ENCODE measurements at regions of chr22 and their contacts with region 1.

Region 1: DNA sequence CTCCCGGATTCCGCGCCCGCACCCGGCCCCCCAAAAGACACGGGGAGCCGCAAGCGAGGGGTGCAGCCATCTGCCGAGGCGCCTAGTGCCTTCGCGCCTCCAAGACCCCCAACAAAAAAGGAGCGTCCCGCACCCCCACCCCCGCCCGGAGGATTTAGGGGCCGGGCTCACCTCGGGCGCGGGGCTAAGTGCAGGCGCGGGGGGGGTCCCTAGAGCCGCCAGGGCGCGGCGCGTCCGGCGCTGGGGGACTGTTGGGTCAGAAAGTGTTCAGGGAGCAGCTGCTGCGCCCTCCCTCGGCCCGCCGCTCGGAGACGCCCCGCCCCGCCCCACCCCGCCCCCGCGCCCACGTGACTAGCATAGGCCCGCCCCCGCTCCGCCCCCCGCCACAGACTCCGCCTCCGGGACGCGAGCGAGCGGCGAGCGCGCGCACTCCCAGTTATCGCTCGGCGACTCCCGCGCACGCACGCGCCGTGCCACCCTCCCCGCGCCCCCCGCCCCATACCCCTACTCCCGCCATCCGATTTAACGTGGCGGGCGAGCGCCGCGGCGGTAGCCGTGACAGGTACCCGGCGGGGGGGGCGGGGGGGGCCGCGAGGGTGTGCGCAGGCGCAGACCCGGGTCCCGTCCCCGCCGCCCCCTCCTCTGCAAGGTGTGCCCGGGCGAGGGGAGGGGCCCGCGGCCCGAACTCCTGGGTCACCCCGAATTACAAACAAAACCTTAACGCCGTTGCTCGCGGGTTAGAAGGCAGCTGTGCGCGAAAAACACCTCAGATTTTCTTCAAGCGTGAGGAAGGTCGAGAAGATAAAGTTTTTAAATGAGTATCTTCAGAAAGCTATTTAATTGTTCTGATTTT is 56.2 kb downstream of the KCNJ4 start:
- DNase-seq: peak; percentile 74 to 91 (median 82)
- ATAC-seq: peak; percentile 93
- H3K4me3 ChIP-seq: peak overlapping the region; percentile 46
- H3K4me3 Mint-ChIP-seq: peak overlapping the region; percentile 78 to 93 (median 85)
- H3K27ac ChIP-seq: peak overlapping the region; percentile 69
- H3K27ac Mint-ChIP-seq: peak overlapping the region in 8 of 9 donors; percentile 55 to 84 (median 76)
- H3K4me1 ChIP-seq: no peaks in the 10 kb centered on the region
- H3K4me1 Mint-ChIP-seq: peaks cover 6 to 41% (median 33%) of the 10 kb centered on the region in 7 donors
- H3K27me3 ChIP-seq: no peaks in the 10 kb centered on the region
- H3K27me3 Mint-ChIP-seq: peaks cover 0 to 30% (median 0%) of the 10 kb centered on the region in 5 donors

Region 2: DNA sequence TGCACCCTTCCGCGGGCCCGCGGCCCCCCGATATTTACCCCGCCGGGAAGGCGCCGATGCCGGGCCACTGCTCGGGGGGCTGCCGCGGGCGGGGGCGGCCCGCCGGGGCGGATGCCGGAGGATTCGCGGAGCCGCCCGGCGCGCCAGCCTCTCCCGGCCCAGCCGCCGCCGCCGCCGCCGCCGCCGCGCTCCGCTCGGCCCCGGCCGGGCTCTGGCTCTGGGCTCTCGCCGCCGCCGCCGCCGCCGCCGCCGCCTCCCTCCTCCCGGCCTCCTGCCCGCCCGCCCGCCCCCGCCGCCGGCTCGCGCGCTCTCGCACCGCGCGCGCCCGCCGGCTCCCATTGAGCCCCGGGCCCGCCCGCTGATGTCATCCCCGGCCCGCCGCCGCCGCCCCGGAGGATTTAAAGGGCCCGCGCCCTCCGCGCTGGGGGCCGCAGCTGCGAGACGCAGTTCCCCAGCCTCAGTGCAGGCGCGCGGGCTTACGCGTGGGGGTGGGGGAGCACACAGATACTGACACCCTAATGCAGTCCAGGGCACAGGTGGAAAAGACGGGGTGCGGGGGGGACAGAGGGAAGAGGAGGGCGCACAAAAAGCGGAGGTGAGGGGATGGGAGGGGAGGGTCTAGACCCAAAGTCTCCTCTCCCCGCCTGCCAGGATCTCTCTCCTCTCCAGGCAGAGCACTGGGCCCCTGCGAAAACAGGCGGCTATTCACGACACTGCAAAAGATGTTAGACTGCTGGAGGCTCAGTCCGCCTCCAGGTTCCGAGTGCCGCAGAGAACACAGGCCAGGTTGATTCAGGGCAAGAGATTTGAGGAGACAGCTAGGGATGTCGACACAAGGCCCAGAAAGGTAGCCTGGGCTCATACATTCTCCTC is 81.5 kb before region 1 on chr22 and contains the start of gene CSNK1E:
- CTCF ChIA-PET with region 1: no interaction called
- POLR2A ChIA-PET with region 1: no interaction called
- intact Hi-C with region 1: loop called (anchors 1 to 2 kb)
- DNase-seq: peak; percentile 67 to 85 (median 74)
- ATAC-seq: peak; percentile 79
- H3K4me3 ChIP-seq: peak within 1 kb of the TSS; percentile 62
- H3K4me3 Mint-ChIP-seq: peak within 1 kb of the TSS; percentile 84 to 92 (median 89)
- H3K27ac ChIP-seq: peak within 1 kb of the TSS; percentile 91
- H3K27ac Mint-ChIP-seq: peak within 1 kb of the TSS; percentile 94 to 97 (median 95)
- H3K4me1 ChIP-seq: peaks cover 28 to 39% of the 10 kb centered on the region in 2 donors
- H3K4me1 Mint-ChIP-seq: peaks cover 31 to 49% (median 42%) of the 10 kb centered on the region in 7 donors
- H3K27me3 ChIP-seq: no peaks in the 10 kb centered on the region
- H3K27me3 Mint-ChIP-seq: no peaks in the 10 kb centered on the region
- total RNA-seq, gene CSNK1E: 71.6 to 143 (median 91.9) TPM

Measured in naive thymus-derived CD4-positive, alpha-beta T cell (primary cell).